Posterior vena cava (tissue), 2 donors: ENCODE measurements at regions of chr1 and their contacts with region 1.

Region 1: GRCh38 chr1:67685067-67685557 is at the start of gene GADD45A:
- DNase-seq: peak; percentile 99
- total RNA-seq, gene GADD45A: 32.4 to 40.4 TPM

Region 2: DNA sequence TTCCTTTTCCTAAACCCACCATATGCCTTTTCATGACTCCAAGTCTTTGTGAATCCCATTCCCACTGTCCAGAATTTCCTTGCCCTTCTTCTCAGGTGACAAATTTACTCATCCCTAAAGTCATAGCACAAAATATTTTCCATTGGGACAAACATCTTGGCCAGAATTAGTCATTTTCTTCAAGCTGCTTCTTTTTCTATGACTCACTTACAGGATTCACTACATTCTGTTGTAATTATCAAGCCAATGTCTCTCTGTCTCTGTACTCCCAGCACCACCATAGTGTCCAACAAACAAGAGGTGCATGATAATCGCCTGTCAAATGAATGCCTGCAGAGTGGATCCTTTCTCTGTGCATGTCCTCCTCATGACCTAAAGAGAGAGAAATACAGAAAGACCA is 1113.3 kb before region 1 on chr1:
- intact Hi-C with region 1: loop called in 1 of 2 experiments (anchors 5 kb)
- DNase-seq: no peak

Region 3: GRCh38 chr1:67561704-67562113 is 123.4 kb before region 1 on chr1:
- intact Hi-C with region 1: loop called in 1 of 2 experiments (anchors 10 kb)
- DNase-seq: peak; percentile 96

Region 4: GRCh38 chr1:67723620-67724019 is 38.5 kb after region 1 on chr1:
- intact Hi-C with region 1: no loop called
- DNase-seq: no peak

Region 5: GRCh38 chr1:67748630-67749029 is 63.5 kb after region 1 on chr1:
- intact Hi-C with region 1: loop called in 1 of 2 experiments (anchors 10 kb)
- DNase-seq: no peak

Region 6: GRCh38 chr1:67832737-67833601 is 147.9 kb after region 1 on chr1 and contains the start of gene GNG12:
- intact Hi-C with region 1: loop called in 1 of 2 experiments (anchors 10 kb)
- DNase-seq: peak; percentile 90
- total RNA-seq, gene GNG12: 165 to 166 TPM